Heart right ventricle (tissue), 16 donors: ENCODE measurements at regions of chr14 and their contacts with region 1.

Region 1: GRCh38 chr14:93892923-93893558 is 34.1 kb upstream of the FAM181A start:
- DNase-seq: peak; percentile 62 to 72
- ATAC-seq: peak in 7 of 8 donors; percentile 49 to 77 (median 66)
- H3K4me3 ChIP-seq: no peak overlapping the region
- H3K27ac ChIP-seq: no peak overlapping the region
- H3K4me1 ChIP-seq: peaks cover 0 to 8% (median 0%) of the 10 kb centered on the region in 9 donors
- H3K27me3 ChIP-seq: peaks cover 0 to 24% (median 9%) of the 10 kb centered on the region in 7 donors
- CTCF ChIP-seq: peak; percentile 93 to 99 (median 97)

Region 2: DNA sequence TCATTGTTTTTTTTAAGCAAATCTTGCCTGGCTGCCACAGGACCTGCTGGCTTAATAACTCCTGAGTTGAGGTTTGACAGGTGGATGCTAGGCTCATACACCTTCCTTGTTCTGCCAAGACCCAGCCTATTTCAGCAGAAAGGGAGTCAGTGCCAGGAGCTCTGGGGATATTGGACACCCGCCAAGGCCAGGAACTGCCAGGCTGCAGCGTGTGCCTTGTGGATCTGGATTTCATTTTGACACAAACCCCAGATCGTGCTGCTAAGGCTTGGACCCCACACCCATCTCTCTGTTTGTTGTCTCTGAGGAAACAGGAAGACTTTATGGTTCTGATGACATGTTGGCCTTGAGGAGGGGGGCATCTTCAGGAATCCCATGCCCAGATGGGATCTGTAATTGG is 60.4 kb before region 1 on chr14:
- intact Hi-C with region 1: loop called in 1 of 10 experiments (anchors 10 kb)
- DNase-seq: peak; percentile 42 to 51
- ATAC-seq: peak in 6 of 8 donors; percentile 56 to 80 (median 72)
- H3K4me3 ChIP-seq: no peak overlapping the region
- H3K27ac ChIP-seq: no peak overlapping the region
- H3K4me1 ChIP-seq: no peaks in the 10 kb centered on the region
- H3K27me3 ChIP-seq: peaks cover 0 to 14% (median 0%) of the 10 kb centered on the region in 7 donors
- CTCF ChIP-seq: no peak